K562 (cell line): ENCODE measurements at regions of chr6 and their contacts with region 1.

Region 1: GRCh38 chr6:37630281-37630799 is 67.3 kb downstream of the MDGA1 start:
- DNase-seq: peak in 2 of 4 experiments; percentile 58 to 66
- ATAC-seq: peak; percentile 44; the same call in 2 of the 3 replicates
- H3K4me3 ChIP-seq: no peak overlapping the region
- H3K27ac ChIP-seq: peak overlapping the region; percentile 5; the same call in 1 of the 3 replicates
- H3K4me1 ChIP-seq: peaks cover 3 to 10% of the 10 kb centered on the region in 2 experiments; a peak in 4 of 5 replicates
- H3K27me3 ChIP-seq: peaks cover 6 to 64% of the 10 kb centered on the region in 2 experiments; a peak in 4 of 5 replicates
- CTCF ChIP-seq: no peak
- EP300 ChIP-seq: peak; percentile 24; the same call in 1 of the 2 replicates
- POLR2A ChIP-seq: no peak
- RAD21 ChIP-seq: no peak

Region 2: DNA sequence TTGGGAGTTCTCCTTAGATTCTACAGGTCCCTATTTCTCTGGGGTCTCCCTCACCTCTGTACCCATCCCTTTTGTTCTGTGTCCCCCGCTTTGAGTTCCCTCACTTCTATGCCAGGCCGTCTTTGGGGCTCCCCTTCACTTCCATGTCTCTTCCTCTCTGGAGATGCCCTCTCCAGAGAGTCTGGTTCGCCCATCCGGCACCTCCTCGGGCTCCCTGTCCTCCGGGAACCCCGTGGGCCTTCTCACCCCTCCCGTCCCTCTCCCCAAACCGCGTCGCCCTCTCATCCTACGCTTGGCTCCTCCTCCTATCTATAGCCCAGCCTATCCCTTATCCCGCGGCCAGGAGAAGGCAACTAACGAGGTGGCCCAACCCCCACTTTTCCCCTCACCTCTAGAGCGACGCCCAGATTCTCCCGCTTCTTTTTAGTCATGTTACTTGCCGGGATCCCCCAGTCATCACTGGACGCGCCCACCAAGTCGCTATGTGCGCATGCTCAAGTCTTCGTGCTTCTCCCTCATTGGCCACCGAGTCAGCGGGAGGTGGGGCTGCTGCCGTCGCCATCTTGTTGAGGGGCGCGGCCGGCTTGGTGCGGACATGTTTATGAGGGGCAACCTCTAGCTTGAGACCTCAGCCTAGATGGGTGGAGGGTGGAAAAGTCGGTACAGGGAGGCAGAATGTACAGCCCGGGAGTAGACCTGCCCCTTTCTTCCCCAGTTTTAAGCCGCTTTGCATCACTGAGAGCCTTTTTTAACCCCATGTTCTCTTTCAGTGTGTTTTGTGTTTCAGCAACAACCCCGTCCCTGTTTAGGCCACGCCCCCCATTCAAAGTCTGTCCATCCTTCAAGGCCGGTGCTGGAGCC is 130.7 kb before region 1 on chr6 and contains the start of gene CCDC167:
- CTCF ChIA-PET with region 1: no interaction called
- POLR2A ChIA-PET with region 1: no interaction called
- in situ Hi-C with region 1: no loop called
- intact Hi-C with region 1: no loop called
- DNase-seq: peak; percentile 99 to 100 (median 99)
- ATAC-seq: peak; percentile 95
- H3K4me3 ChIP-seq: peak within 1 kb of the TSS; percentile 53
- H3K27ac ChIP-seq: peak within 1 kb of the TSS; percentile 68
- H3K4me1 ChIP-seq: peaks cover 11 to 26% of the 10 kb centered on the region in 2 experiments; a peak in 3 of 5 replicates
- H3K27me3 ChIP-seq: no peaks in the 10 kb centered on the region
- CTCF ChIP-seq: no peak
- EP300 ChIP-seq: peak; percentile 46; the same call in 1 of the 2 replicates
- POLR2A ChIP-seq: peak; percentile 88
- RAD21 ChIP-seq: no peak
- polyA plus RNA-seq, gene CCDC167: 85.0 to 114 TPM

Region 3: GRCh38 chr6:37618916-37619590 is 11.3 kb before region 1 on chr6:
- CTCF ChIA-PET with region 1: no interaction called
- POLR2A ChIA-PET with region 1: interaction called, 10 read pairs
- in situ Hi-C with region 1: no loop called
- intact Hi-C with region 1: no loop called
- DNase-seq: no peak
- ATAC-seq: no peak
- H3K4me3 ChIP-seq: no peak overlapping the region
- H3K27ac ChIP-seq: no peak overlapping the region
- H3K4me1 ChIP-seq: peaks cover 3 to 11% of the 10 kb centered on the region in 2 experiments; a peak in 2 of 5 replicates
- H3K27me3 ChIP-seq: peaks cover 10 to 57% of the 10 kb centered on the region in 2 experiments
- CTCF ChIP-seq: no peak
- EP300 ChIP-seq: no peak
- POLR2A ChIP-seq: no peak
- RAD21 ChIP-seq: no peak

Region 4: DNA sequence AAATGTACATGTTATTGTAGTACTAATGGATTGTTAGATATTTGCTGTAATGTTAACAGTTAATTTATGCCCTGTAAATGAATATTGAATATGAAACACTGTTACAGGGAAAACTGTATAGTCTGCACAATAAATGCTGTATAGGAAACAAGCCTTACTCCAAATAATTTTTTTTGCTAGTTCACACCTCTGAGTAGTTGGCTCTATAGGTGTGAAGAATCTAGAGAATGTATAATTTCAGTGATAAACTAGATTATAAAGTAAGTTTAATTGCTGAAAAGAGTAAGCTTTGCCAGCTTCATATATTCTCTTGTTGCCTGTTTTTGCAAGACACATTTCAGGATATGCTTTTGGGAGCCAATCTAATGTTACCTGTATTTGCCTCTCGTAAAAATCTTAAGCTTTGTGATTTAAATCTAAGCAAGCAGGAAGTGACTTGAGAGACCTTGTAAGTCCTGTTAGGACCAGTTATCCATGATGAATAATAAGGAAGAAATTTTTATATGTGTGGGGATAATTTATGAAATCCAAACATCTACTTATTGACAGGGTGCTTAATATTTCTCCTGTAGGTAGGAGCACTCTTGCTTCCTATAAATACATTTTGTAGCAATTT is 421.6 kb after region 1 on chr6:
- CTCF ChIA-PET with region 1: no interaction called
- POLR2A ChIA-PET with region 1: no interaction called
- in situ Hi-C with region 1: no loop called
- intact Hi-C with region 1: no loop called
- DNase-seq: no peak
- ATAC-seq: no peak
- H3K4me3 ChIP-seq: no peak overlapping the region
- H3K27ac ChIP-seq: no peak overlapping the region
- H3K4me1 ChIP-seq: peaks cover 2% of the 10 kb centered on the region in 2 experiments; a peak in 3 of 5 replicates
- H3K27me3 ChIP-seq: no peaks in the 10 kb centered on the region
- CTCF ChIP-seq: no peak
- EP300 ChIP-seq: no peak
- POLR2A ChIP-seq: no peak
- RAD21 ChIP-seq: no peak